ENCODE measurements at regions of chr17 and their contacts with region 1.

Region 1: DNA sequence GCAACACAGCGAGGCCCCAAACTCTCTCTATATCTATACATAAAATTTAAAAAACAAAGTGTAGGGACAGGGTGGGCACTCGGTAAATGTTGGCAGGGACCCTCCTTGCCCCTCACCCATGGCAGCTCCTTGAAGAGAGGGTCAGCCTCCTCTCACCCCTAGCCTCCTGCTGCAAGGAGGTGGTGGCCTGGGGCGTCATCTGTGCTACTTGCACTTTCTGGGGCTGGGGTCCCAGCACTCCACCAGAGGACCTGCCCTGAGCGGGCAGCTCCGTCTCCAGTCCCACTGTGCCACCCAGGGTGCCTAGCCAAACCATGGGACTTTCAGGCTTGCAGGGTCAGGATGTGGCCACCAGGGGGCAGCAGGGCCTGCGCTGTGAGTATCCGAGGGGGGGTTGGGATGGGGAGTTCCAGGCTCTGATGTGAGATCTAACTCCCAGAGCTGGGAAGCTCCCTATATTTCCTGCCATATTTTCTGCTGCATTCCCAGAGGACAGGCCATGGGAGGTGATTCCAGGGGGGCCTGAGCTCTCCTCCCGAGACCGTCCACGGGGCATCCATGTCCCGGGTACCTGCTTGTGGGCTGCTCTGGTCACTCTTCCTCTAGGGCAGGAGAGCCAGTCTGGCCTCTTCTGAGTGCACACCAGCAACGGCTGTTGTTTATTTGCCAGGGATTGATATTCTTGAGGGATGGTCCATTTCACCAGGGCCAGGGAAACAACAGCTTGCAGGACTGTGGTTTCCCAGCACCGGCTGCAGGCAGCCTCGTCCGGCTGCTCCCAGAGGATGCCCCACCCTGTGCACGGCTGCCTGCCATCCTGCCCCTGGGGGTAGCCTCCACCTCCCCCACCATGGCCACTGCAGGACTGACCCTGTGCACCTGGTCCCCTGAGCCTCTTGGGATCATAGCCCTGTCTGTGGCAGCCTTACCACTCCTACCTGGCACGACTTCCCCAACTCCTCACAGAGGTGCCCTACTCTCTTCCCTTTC is 1.1 kb downstream of the GPR142 start:
- DNase-seq: no peak
- ATAC-seq: peak; percentile 88
- H3K4me3 ChIP-seq: no peak overlapping the region
- H3K27ac ChIP-seq: no peak overlapping the region
- H3K4me1 ChIP-seq: no peaks in the 10 kb centered on the region
- H3K27me3 ChIP-seq: no peaks in the 10 kb centered on the region
- CTCF ChIP-seq: peak; percentile 98

Region 2: GRCh38 chr17:74354123-74354522 is 14.3 kb before region 1 on chr17:
- CTCF ChIA-PET with region 1: interaction called, 10 read pairs
- POLR2A ChIA-PET with region 1: no interaction called
- in situ Hi-C with region 1: no loop called
- intact Hi-C with region 1: no loop called
- DNase-seq: peak; percentile 22
- ATAC-seq: peak; percentile 81
- H3K4me3 ChIP-seq: no peak overlapping the region
- H3K27ac ChIP-seq: no peak overlapping the region
- H3K4me1 ChIP-seq: no peaks in the 10 kb centered on the region; the same call in 1 of the 2 replicates
- H3K27me3 ChIP-seq: peaks cover 11% of the 10 kb centered on the region
- CTCF ChIP-seq: peak; percentile 98

Region 3: GRCh38 chr17:74457146-74457819 is 88.9 kb after region 1 on chr17:
- CTCF ChIA-PET with region 1: interaction called, 13 read pairs
- POLR2A ChIA-PET with region 1: no interaction called
- in situ Hi-C with region 1: no loop called
- intact Hi-C with region 1: no loop called
- DNase-seq: no peak
- ATAC-seq: peak; percentile 43; the same call in 1 of the 2 replicates
- H3K4me3 ChIP-seq: no peak overlapping the region
- H3K27ac ChIP-seq: no peak overlapping the region
- H3K4me1 ChIP-seq: peaks cover 17% of the 10 kb centered on the region
- H3K27me3 ChIP-seq: 0 out of 2 replicates have a peak, but pooled peaks cover 2% of the 10 kb centered on the region
- CTCF ChIP-seq: peak; percentile 98

Region 4: GRCh38 chr17:74532115-74532514 is 163.7 kb after region 1 on chr17:
- CTCF ChIA-PET with region 1: interaction called, 5 read pairs
- POLR2A ChIA-PET with region 1: no interaction called
- in situ Hi-C with region 1: no loop called
- intact Hi-C with region 1: loop called (anchors 5 kb)
- DNase-seq: no peak
- ATAC-seq: peak; percentile 42; the same call in 1 of the 2 replicates
- H3K4me3 ChIP-seq: no peak overlapping the region
- H3K27ac ChIP-seq: no peak overlapping the region
- H3K4me1 ChIP-seq: no peaks in the 10 kb centered on the region; the same call in 1 of the 2 replicates
- H3K27me3 ChIP-seq: peaks cover 28% of the 10 kb centered on the region
- CTCF ChIP-seq: no peak

Measured in Panc1 (cell line).